Heart right ventricle (tissue), 16 donors: ENCODE measurements at regions of chr4 and their contacts with region 1.

Region 1: DNA sequence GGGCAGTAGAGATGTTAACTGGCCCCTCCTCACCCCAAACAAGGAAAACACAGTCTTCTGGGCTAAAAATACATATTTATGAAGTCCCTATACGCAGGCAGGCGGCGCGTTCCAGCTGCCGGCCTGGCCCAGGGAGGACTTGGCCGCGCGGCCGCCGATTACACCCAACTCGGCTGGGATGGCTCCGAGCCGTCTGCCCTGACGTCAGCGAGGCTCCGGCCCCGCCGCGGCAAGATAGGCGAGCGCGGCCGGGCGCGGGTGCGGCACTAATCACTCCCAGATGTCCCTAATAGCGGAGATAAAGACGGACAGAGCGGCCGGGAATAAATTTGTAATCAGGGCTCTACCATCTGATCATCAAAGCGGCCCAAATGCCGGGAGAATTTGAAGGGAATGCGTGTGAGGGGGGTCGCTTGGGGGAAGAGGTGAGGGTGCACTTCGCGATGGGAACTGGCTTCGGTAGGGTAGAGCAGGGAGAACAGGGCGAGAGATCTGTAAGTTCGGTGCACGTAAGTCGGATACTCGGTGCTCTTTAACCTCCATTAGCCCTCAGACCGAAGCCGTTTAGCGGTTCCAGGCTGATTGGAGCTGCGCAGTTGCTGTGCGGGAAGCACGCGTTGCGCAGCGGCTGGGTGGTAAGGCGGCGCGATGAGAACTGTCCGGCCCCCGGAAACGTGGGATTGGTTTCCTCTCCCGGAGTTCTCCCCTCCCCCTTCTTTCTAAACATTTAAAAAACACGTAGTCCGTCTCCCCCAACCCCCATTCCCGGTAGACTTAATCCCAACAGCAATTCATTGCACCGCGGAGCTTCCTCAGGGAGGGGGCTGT is 7.7 kb downstream of the HAND2 start:
- DNase-seq: peak; percentile 86 to 91
- ATAC-seq: peak; percentile 74 to 84 (median 81)
- H3K4me3 ChIP-seq: peak overlapping the region; percentile 14 to 90 (median 74)
- H3K27ac ChIP-seq: peak overlapping the region; percentile 84 to 97 (median 96)
- H3K4me1 ChIP-seq: peaks cover 2 to 57% (median 39%) of the 10 kb centered on the region in 9 donors
- H3K27me3 ChIP-seq: peaks cover 0 to 100% (median 39%) of the 10 kb centered on the region in 7 donors
- CTCF ChIP-seq: peak in 5 of 9 donors; percentile 14 to 52 (median 44)

Region 2: GRCh38 chr4:173288296-173288695 is 234.0 kb before region 1 on chr4:
- intact Hi-C with region 1: no loop called
- DNase-seq: peak in 1 of 2 donors; percentile 80
- ATAC-seq: peak in 7 of 8 donors; percentile 33 to 79 (median 63)
- H3K4me3 ChIP-seq: peak overlapping the region in 2 of 10 donors; percentile 33 to 37
- H3K27ac ChIP-seq: no peak overlapping the region
- H3K4me1 ChIP-seq: peaks cover 0 to 9% (median 0%) of the 10 kb centered on the region in 9 donors
- H3K27me3 ChIP-seq: no peaks in the 10 kb centered on the region
- CTCF ChIP-seq: peak; percentile 22 to 78 (median 63)

Region 3: DNA sequence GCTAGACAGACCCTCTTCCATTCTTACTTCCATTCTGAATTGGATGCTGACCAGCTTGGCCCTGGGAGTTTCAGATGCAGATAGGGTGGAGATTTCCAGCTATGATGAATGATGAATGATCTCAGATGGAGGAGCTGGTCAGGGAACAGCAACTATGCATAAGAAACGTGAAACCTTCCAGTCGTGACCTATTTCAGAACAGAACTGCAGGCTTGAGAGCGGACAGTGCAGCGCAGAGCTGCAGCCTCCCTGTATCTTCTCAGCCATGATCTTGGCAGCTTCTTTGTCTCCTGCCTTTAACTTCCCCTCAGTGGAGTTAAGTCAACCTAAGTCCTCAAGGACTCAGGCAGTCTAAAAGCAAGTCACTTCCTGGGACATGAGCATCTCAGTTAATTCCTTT is 50.9 kb after region 1 on chr4:
- intact Hi-C with region 1: no loop called
- DNase-seq: no peak
- ATAC-seq: peak in 1 of 8 donors; percentile 12
- H3K4me3 ChIP-seq: no peak overlapping the region
- H3K27ac ChIP-seq: peak overlapping the region in 2 of 10 donors; percentile 2 to 4
- H3K4me1 ChIP-seq: peaks cover 0 to 48% (median 20%) of the 10 kb centered on the region in 9 donors
- H3K27me3 ChIP-seq: no peaks in the 10 kb centered on the region
- CTCF ChIP-seq: no peak

Region 4: DNA sequence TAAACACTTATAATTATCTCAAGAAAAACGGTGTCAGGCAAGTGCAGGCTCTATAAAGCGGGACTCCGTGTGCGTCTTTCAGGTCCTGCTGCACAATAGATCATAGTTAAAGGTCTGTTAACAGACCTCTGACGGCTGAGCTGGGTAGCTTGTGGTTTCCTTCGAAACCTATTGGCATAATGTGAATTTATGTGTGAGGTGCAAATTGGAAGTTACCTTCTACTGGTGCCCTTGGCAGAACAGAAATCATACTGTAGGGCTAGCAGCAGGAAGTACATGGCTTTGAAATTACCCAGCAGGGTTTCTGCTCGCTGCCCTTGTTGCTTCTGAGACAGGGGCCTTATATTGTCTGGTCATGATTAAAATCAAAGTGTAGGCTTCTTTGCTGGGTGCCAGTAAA is 224.1 kb after region 1 on chr4:
- intact Hi-C with region 1: loop called in 2 of 10 experiments (anchors 2 to 5 kb)
- DNase-seq: no peak
- ATAC-seq: peak; percentile 22 to 72 (median 60)
- H3K4me3 ChIP-seq: peak overlapping the region in 4 of 10 donors; percentile 2 to 11 (median 6)
- H3K27ac ChIP-seq: peak overlapping the region in 9 of 10 donors; percentile 30 to 86 (median 69)
- H3K4me1 ChIP-seq: peaks cover 0 to 20% (median 0%) of the 10 kb centered on the region in 9 donors
- H3K27me3 ChIP-seq: no peaks in the 10 kb centered on the region
- CTCF ChIP-seq: no peak

Region 5: GRCh38 chr4:174156239-174156826 is 634.0 kb after region 1 on chr4:
- intact Hi-C with region 1: loop called in 1 of 10 experiments (anchors 5 kb)
- DNase-seq: peak in 1 of 2 donors; percentile 12
- ATAC-seq: peak; percentile 73 to 85 (median 82)
- H3K4me3 ChIP-seq: peak overlapping the region in 2 of 10 donors; percentile 14
- H3K27ac ChIP-seq: peak overlapping the region in 2 of 10 donors; percentile 28 to 37
- H3K4me1 ChIP-seq: peaks cover 0 to 18% (median 7%) of the 10 kb centered on the region in 9 donors
- H3K27me3 ChIP-seq: no peaks in the 10 kb centered on the region
- CTCF ChIP-seq: peak; percentile 37 to 77 (median 67)

Region 6: GRCh38 chr4:174222266-174222872 is 700.0 kb after region 1 on chr4:
- intact Hi-C with region 1: loop called in 1 of 10 experiments (anchors 10 kb)
- DNase-seq: no peak
- ATAC-seq: no peak
- H3K4me3 ChIP-seq: no peak overlapping the region
- H3K27ac ChIP-seq: no peak overlapping the region
- H3K4me1 ChIP-seq: peaks cover 0 to 13% (median 9%) of the 10 kb centered on the region in 9 donors
- H3K27me3 ChIP-seq: peaks cover 0 to 44% (median 16%) of the 10 kb centered on the region in 7 donors
- CTCF ChIP-seq: peak; percentile 24 to 66 (median 61)